T-cell (primary cell): ENCODE measurements at regions of chr6 and their contacts with region 1.

Region 1: GRCh38 chr6:15296735-15297134 is 50.9 kb downstream of the JARID2 start:
- DNase-seq: peak in 7 of 35 experiments; percentile 4 to 45 (median 17)
- ATAC-seq: peak; percentile 24 to 67 (median 58)
- H3K4me3 ChIP-seq: no peak overlapping the region
- H3K4me3 Mint-ChIP-seq: peak overlapping the region in 1 of 3 donors; percentile 52
- H3K27ac ChIP-seq: peak overlapping the region; percentile 25
- H3K27ac Mint-ChIP-seq: peak overlapping the region; percentile 57 to 87
- H3K4me1 ChIP-seq: peaks cover 34 to 42% of the 10 kb centered on the region in 2 experiments
- H3K4me1 Mint-ChIP-seq: peaks cover 84 to 85% (median 84%) of the 10 kb centered on the region in 3 donors
- H3K27me3 ChIP-seq: no peaks in the 10 kb centered on the region
- H3K27me3 Mint-ChIP-seq: no peaks in the 10 kb centered on the region

Region 2: GRCh38 chr6:14243617-14244016 is 1053.1 kb before region 1 on chr6:
- CTCF ChIA-PET with region 1: no interaction called
- POLR2A ChIA-PET with region 1: interaction called in 1 of 2 experiments, 11 read pairs
- DNase-seq: no peak
- ATAC-seq: no peak
- H3K4me3 ChIP-seq: no peak overlapping the region
- H3K4me3 Mint-ChIP-seq: no peak overlapping the region
- H3K27ac ChIP-seq: no peak overlapping the region
- H3K27ac Mint-ChIP-seq: no peak overlapping the region
- H3K4me1 ChIP-seq: no peaks in the 10 kb centered on the region
- H3K4me1 Mint-ChIP-seq: peaks cover 5 to 10% (median 6%) of the 10 kb centered on the region in 3 donors
- H3K27me3 ChIP-seq: no peaks in the 10 kb centered on the region
- H3K27me3 Mint-ChIP-seq: no peaks in the 10 kb centered on the region

Region 3: GRCh38 chr6:15322781-15323536 is 26.2 kb after region 1 on chr6:
- CTCF ChIA-PET with region 1: no interaction called
- POLR2A ChIA-PET with region 1: no interaction called
- DNase-seq: no peak
- ATAC-seq: peak in 1 of 4 experiments; percentile 37
- H3K4me3 ChIP-seq: no peak overlapping the region
- H3K4me3 Mint-ChIP-seq: no peak overlapping the region
- H3K27ac ChIP-seq: no peak overlapping the region
- H3K27ac Mint-ChIP-seq: peak overlapping the region in 1 of 2 donors; percentile 4
- H3K4me1 ChIP-seq: peaks cover 7 to 28% of the 10 kb centered on the region in 2 experiments
- H3K4me1 Mint-ChIP-seq: peaks cover 79 to 85% (median 82%) of the 10 kb centered on the region in 3 donors
- H3K27me3 ChIP-seq: no peaks in the 10 kb centered on the region
- H3K27me3 Mint-ChIP-seq: no peaks in the 10 kb centered on the region